Endothelial cell of umbilical vein (primary cell): ENCODE measurements at regions of chr20 and their contacts with region 1.

Region 1: DNA sequence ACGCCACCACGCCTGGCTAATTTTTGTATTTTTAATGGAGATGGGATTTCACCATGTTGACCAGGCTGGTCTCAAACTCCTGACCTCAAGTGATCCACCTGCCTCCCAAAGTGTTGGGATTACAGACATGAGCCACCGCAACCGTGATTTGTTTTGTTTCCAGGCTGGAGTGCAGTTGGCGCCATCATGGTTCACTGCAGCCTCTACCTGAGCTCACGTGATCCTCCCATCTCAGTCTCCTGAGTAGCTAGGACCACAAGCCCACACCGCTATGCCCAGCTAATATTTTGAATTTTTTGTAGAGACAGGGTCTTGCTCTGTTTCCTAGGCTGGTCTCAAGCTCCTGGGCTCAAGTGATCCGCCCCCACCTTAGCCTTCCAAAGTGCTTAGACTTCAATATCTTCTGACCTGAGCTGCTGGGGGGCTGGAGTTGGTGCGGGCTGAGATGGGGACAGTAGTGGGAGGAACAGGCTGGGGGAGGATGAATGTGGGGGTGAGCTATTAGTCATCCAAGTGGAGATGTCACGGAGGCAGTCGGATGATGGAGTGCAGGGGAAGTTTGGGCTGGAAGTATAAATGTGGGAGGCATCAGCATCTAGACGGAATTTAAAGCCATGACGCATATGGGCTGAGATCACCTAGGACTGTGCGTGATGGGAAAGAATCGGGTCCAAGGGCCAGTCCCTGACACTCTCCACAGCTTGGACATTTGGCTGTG is 23.1 kb upstream of the ZMYND8 start:
- DNase-seq: no peak
- H3K4me3 ChIP-seq: no peak overlapping the region
- H3K27ac ChIP-seq: no peak overlapping the region
- H3K4me1 ChIP-seq: peaks cover 5% of the 10 kb centered on the region
- H3K27me3 ChIP-seq: no peaks in the 10 kb centered on the region
- CTCF ChIP-seq: no peak
- POLR2A ChIP-seq: no peak

Region 2: DNA sequence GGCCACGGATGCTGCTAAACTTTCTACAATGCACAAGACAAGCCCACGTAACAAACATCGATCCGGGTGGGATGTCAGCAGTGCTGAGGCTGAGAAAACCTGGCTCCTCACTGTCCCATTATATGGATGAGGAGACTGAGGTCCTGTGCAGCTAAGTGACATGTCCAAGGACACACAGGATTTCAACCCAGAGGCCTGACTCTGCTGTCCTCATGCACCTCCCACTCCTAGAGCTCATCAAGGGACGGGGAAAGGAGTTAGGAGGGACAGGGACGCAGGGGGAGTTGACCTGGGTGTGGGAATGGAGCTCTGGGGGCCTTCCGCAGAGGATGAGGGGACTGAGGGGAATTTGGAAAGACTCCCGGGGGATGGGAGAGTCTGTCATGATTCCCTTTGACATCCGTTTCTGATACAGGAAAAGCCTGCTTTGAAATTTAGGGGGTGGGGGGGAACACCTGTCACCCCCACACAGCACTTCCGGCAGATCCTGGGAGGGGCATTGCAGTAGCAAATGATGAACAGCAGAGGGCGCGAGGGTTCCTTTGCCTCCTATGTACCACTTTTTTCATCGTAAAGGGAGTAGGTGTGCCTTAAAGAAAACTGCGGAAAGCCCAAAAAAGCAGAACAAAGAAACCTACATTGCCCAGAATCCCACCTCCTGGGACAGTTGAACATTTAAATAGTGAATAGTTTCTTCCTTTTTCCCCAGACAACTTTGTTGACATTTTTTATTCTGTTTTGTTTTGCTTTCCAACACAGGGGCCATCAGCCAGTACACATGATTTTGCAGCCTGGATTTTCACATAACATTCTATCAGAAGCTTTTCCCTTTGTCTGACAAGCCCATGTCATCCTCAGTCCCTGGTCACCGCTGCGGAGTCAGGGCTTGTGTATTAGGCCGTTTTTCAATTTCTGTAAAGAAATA is 621.6 kb before region 1 on chr20:
- CTCF ChIA-PET with region 1: interaction called, 30 read pairs
- POLR2A ChIA-PET with region 1: no interaction called
- dilution Hi-C with region 1: no loop called
- intact Hi-C with region 1: no loop called
- DNase-seq: peak; percentile 42
- H3K4me3 ChIP-seq: no peak overlapping the region
- H3K27ac ChIP-seq: no peak overlapping the region
- H3K4me1 ChIP-seq: no peaks in the 10 kb centered on the region
- H3K27me3 ChIP-seq: no peaks in the 10 kb centered on the region
- CTCF ChIP-seq: peak; percentile 83
- POLR2A ChIP-seq: no peak

Region 3: DNA sequence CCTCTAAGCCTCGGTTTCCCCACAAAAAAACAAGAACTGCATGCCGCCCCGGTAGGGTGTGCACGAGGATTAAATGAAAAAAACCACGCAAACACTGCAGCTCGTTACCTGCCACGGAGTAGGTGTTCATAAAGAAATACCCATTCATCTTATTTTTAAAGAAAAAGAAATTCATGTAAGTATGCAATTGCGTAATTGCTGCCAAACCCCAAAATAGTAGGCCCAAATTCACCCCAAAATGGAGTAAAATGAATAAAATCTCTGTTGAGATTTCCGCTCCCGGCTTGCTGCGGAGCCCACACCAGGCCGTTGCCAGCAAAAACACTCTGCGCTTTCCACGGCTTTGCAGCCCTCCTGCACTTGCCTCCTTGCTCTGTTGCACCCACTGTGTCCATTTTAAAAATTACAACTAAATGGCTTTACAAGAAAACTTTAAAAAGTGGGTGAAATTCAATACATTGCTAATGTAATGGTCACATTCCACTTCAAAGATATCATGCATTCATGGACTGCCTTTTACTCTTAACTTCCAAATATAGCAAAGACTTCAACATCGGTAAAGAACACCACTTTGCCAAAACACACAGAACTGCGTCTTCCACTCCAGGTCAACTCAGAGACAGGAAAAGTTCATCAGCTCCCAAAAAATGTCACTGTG is 148.1 kb before region 1 on chr20:
- CTCF ChIA-PET with region 1: interaction called, 15 read pairs
- POLR2A ChIA-PET with region 1: no interaction called
- dilution Hi-C with region 1: no loop called
- intact Hi-C with region 1: no loop called
- DNase-seq: no peak
- H3K4me3 ChIP-seq: no peak overlapping the region
- H3K27ac ChIP-seq: no peak overlapping the region
- H3K4me1 ChIP-seq: no peaks in the 10 kb centered on the region
- H3K27me3 ChIP-seq: no peaks in the 10 kb centered on the region
- CTCF ChIP-seq: no peak
- POLR2A ChIP-seq: no peak

Region 4: GRCh38 chr20:47272893-47273590 is 106.5 kb before region 1 on chr20:
- CTCF ChIA-PET with region 1: interaction called, 739 read pairs
- POLR2A ChIA-PET with region 1: interaction called, 28 read pairs
- dilution Hi-C with region 1: no loop called
- intact Hi-C with region 1: loop called (anchors 1 kb)
- DNase-seq: peak; percentile 80
- H3K4me3 ChIP-seq: no peak overlapping the region
- H3K27ac ChIP-seq: peak overlapping the region; percentile 87
- H3K4me1 ChIP-seq: peaks cover 39% of the 10 kb centered on the region
- H3K27me3 ChIP-seq: no peaks in the 10 kb centered on the region
- CTCF ChIP-seq: peak; percentile 60 to 67
- POLR2A ChIP-seq: no peak

Region 5: GRCh38 chr20:47317127-47317895 is 62.3 kb before region 1 on chr20:
- CTCF ChIA-PET with region 1: interaction called, 53 read pairs
- POLR2A ChIA-PET with region 1: no interaction called
- dilution Hi-C with region 1: no loop called
- intact Hi-C with region 1: loop called (anchors 1 kb)
- DNase-seq: peak; percentile 97
- H3K4me3 ChIP-seq: peak overlapping the region in 1 of 3 experiments; percentile 15
- H3K27ac ChIP-seq: peak overlapping the region; percentile 86
- H3K4me1 ChIP-seq: peaks cover 67% of the 10 kb centered on the region
- H3K27me3 ChIP-seq: no peaks in the 10 kb centered on the region
- CTCF ChIP-seq: no peak
- POLR2A ChIP-seq: peak; percentile 90

Region 6: GRCh38 chr20:47356526-47357295 is 22.9 kb before region 1 on chr20 and contains the start of gene ZMYND8:
- CTCF ChIA-PET with region 1: interaction called, 406 read pairs
- POLR2A ChIA-PET with region 1: interaction called, 20 read pairs
- dilution Hi-C with region 1: no loop called
- intact Hi-C with region 1: loop called (anchors 1 kb)
- DNase-seq: peak; percentile 98
- H3K4me3 ChIP-seq: peak within 1 kb of the TSS; percentile 16 to 82 (median 35)
- H3K27ac ChIP-seq: peak within 1 kb of the TSS; percentile 97
- H3K4me1 ChIP-seq: peaks cover 94% of the 10 kb centered on the region
- H3K27me3 ChIP-seq: no peaks in the 10 kb centered on the region
- CTCF ChIP-seq: no peak
- POLR2A ChIP-seq: peak; percentile 9
- total RNA-seq, gene ZMYND8: 75.2 and 76.3 TPM in 2 replicates

Region 7: DNA sequence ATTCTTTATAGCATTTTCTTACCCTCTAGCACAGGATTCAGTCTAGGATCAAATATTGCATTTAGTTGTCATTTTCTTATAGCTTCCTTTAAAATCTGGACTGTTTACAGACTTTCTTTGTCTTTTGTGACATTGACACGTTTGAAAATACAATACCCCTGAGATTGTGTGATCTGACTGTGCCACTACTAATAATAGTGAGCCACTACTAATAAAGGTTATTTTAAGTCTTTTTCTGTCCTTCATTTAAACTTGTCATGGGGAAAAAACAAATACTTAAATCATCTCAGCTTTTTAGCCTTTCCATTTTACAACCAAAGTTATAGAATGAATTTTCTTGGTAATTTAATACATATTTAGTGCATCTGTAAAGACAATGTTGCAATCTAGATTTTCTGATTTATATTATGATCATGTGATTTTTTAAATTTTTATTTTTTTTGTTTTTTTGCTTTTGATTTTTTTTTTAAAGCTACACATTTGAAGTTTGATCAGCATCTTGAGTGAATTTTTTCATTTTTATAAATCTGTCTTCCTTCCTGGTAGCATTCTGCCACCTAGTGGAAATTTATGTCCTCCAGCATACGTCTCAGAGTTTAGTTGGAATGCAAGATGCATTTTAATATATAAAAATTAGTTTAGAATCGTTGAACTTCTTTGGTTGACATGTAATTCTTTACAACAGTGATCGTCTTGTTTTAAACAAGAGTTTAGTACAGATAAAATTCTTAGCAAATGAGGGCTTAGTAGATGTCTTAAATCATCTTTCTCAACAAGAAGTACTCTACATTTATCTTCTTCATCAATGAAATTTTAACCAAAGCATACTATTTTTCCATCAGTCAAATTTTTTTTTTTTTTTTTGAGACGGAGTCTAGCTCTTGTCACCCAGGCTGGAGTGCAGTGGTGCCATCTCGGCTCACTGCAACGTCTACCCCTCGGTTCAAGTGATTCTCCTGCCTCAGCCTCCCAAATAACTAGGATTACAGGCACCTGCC is 241.5 kb after region 1 on chr20:
- CTCF ChIA-PET with region 1: interaction called, 156 read pairs
- POLR2A ChIA-PET with region 1: interaction called, 5 read pairs
- dilution Hi-C with region 1: no loop called
- intact Hi-C with region 1: loop called (anchors 1 kb)
- DNase-seq: peak; percentile 83
- H3K4me3 ChIP-seq: no peak overlapping the region
- H3K27ac ChIP-seq: no peak overlapping the region
- H3K4me1 ChIP-seq: peaks cover 3% of the 10 kb centered on the region
- H3K27me3 ChIP-seq: no peaks in the 10 kb centered on the region
- CTCF ChIP-seq: peak; percentile 49 to 55
- POLR2A ChIP-seq: no peak

Region 8: DNA sequence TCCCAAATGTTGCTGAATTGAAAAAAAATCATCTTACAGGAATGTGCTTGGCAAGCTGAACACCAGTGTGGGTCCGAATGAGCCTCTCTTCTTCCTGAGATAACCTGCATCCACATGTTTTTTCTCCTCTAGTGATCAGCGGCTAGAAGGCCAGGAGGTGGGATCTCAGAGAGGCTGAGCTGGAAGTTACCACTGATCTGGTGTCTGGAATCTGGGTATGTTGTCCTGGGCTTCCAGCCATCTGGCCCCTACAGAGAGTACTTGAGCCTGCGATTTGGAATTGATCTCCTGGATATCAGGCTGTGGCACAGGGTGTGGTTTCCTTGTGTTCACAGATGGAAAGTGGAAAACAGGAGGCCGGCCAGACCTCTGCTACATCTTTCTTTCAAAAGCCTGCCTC is 369.7 kb after region 1 on chr20:
- CTCF ChIA-PET with region 1: no interaction called
- POLR2A ChIA-PET with region 1: no interaction called
- dilution Hi-C with region 1: no loop called
- intact Hi-C with region 1: no loop called
- DNase-seq: no peak
- H3K4me3 ChIP-seq: no peak overlapping the region
- H3K27ac ChIP-seq: no peak overlapping the region
- H3K4me1 ChIP-seq: no peaks in the 10 kb centered on the region
- H3K27me3 ChIP-seq: no peaks in the 10 kb centered on the region
- CTCF ChIP-seq: no peak
- POLR2A ChIP-seq: no peak